ENCODE measurements at regions of chr1 and their contacts with region 1.

Region 1: DNA sequence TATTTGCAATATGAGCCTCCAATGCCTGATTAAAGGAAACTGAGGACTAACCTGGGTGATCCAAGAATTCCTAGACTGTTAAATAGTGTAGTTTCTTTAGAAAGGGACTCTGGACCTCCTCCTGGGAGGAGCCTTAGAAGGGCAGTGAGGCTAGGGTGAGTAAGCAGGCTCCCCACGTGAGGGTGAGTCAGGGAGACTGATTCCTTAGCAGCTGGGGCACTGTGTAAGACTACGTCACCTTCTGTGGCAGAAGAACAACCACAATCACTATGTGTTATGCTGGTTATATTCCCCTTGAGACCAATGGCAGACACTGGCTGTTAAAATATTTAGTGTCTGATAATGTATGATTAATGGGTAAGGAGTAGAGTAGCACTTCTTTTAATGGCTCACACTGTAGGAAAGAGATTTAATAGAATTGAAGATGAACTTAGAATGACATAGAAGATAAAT is 53.3 kb upstream of the SYT14 start:
- DNase-seq: peak; percentile 99
- H3K4me3 Mint-ChIP-seq: peak overlapping the region; percentile 0
- H3K27ac Mint-ChIP-seq: peak overlapping the region; percentile 81
- H3K4me1 Mint-ChIP-seq: peaks cover 70% of the 10 kb centered on the region
- H3K27me3 Mint-ChIP-seq: no peaks in the 10 kb centered on the region
- CTCF ChIP-seq: no peak

Region 2: GRCh38 chr1:209805875-209806760 is 78.6 kb before region 1 on chr1 and contains the start of gene IRF6:
- CTCF ChIA-PET with region 1: interaction called, 4 read pairs
- POLR2A ChIA-PET with region 1: interaction called, 10 read pairs
- intact Hi-C with region 1: no loop called
- DNase-seq: peak; percentile 99
- H3K4me3 Mint-ChIP-seq: peak within 1 kb of the TSS; percentile 90
- H3K27ac Mint-ChIP-seq: peak within 1 kb of the TSS; percentile 92
- H3K4me1 Mint-ChIP-seq: peaks cover 74% of the 10 kb centered on the region
- H3K27me3 Mint-ChIP-seq: no peaks in the 10 kb centered on the region
- CTCF ChIP-seq: no peak
- total RNA-seq, gene IRF6: 87.8 and 106 TPM in 2 replicates

Region 3: GRCh38 chr1:209850342-209850979 is 34.2 kb before region 1 on chr1:
- CTCF ChIA-PET with region 1: interaction called, 201 read pairs
- POLR2A ChIA-PET with region 1: interaction called, 3 read pairs
- intact Hi-C with region 1: loop called (anchors 5 kb)
- DNase-seq: peak; percentile 80
- H3K4me3 Mint-ChIP-seq: no peak overlapping the region
- H3K27ac Mint-ChIP-seq: peak overlapping the region; percentile 47
- H3K4me1 Mint-ChIP-seq: peaks cover 26% of the 10 kb centered on the region
- H3K27me3 Mint-ChIP-seq: no peaks in the 10 kb centered on the region
- CTCF ChIP-seq: peak; percentile 92

Region 4: GRCh38 chr1:209860293-209860881 is 24.3 kb before region 1 on chr1:
- CTCF ChIA-PET with region 1: interaction called, 201 read pairs
- POLR2A ChIA-PET with region 1: interaction called, 43 read pairs
- intact Hi-C with region 1: loop called (anchors 1 kb)
- DNase-seq: peak; percentile 94
- H3K4me3 Mint-ChIP-seq: no peak overlapping the region
- H3K27ac Mint-ChIP-seq: peak overlapping the region; percentile 73
- H3K4me1 Mint-ChIP-seq: peaks cover 43% of the 10 kb centered on the region
- H3K27me3 Mint-ChIP-seq: no peaks in the 10 kb centered on the region
- CTCF ChIP-seq: peak; percentile 99

Region 5: GRCh38 chr1:209870151-209870831 is 14.4 kb before region 1 on chr1:
- CTCF ChIA-PET with region 1: interaction called, 22 read pairs
- POLR2A ChIA-PET with region 1: interaction called, 156 read pairs
- intact Hi-C with region 1: loop called (anchors 1 kb)
- DNase-seq: no peak
- H3K4me3 Mint-ChIP-seq: no peak overlapping the region
- H3K27ac Mint-ChIP-seq: peak overlapping the region; percentile 98
- H3K4me1 Mint-ChIP-seq: peaks cover 65% of the 10 kb centered on the region
- H3K27me3 Mint-ChIP-seq: no peaks in the 10 kb centered on the region
- CTCF ChIP-seq: no peak

Region 6: DNA sequence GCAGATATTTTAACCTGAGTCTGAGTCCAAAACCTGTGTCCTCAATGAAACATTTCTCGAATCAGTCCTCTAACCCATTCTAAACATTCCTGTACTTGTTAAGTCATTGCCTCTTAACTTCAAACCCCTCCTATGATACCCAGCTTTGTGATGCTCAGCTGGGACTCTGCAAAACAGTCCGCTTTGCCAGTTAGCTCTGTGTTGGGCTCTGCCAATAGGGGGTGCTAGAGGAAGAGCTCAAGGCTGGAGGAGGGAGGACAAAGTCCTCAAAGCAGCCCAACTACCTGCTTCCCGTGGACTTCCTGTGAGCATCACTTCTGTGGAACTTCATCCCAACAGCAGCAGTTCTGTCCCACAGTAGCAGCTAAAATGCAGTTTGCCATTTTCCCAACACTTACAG is 15.3 kb after region 1 on chr1:
- CTCF ChIA-PET with region 1: interaction called, 4 read pairs
- POLR2A ChIA-PET with region 1: interaction called, 37 read pairs
- intact Hi-C with region 1: no loop called
- DNase-seq: peak; percentile 54
- H3K4me3 Mint-ChIP-seq: no peak overlapping the region
- H3K27ac Mint-ChIP-seq: peak overlapping the region; percentile 70
- H3K4me1 Mint-ChIP-seq: peaks cover 45% of the 10 kb centered on the region
- H3K27me3 Mint-ChIP-seq: no peaks in the 10 kb centered on the region
- CTCF ChIP-seq: peak; percentile 36

Region 7: DNA sequence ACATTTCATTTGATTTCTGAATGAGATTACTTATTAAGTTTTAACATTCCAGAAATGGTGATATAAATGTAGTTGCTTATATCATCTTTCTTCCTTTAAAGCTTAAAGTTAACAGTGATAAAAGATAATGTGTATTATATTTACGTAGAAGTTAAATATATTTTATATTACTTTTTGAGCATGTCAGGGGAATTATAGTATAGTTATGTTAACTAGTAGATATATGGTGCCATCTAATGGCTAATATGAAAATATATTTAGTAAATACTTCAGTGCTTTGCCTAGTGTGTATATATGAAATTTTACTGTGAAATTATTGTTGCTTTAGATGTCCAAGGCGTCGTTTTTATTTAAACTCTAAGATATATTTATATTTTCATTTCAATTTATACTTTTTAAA is 104.8 kb after region 1 on chr1:
- CTCF ChIA-PET with region 1: interaction called, 66 read pairs
- POLR2A ChIA-PET with region 1: interaction called, 12 read pairs
- intact Hi-C with region 1: loop called (anchors 1 kb)
- DNase-seq: peak; percentile 42
- H3K4me3 Mint-ChIP-seq: no peak overlapping the region
- H3K27ac Mint-ChIP-seq: peak overlapping the region; percentile 70
- H3K4me1 Mint-ChIP-seq: peaks cover 16% of the 10 kb centered on the region
- H3K27me3 Mint-ChIP-seq: peaks cover 15% of the 10 kb centered on the region
- CTCF ChIP-seq: peak; percentile 74